ENCODE measurements at regions of chr7 and their contacts with region 1.

Region 1: DNA sequence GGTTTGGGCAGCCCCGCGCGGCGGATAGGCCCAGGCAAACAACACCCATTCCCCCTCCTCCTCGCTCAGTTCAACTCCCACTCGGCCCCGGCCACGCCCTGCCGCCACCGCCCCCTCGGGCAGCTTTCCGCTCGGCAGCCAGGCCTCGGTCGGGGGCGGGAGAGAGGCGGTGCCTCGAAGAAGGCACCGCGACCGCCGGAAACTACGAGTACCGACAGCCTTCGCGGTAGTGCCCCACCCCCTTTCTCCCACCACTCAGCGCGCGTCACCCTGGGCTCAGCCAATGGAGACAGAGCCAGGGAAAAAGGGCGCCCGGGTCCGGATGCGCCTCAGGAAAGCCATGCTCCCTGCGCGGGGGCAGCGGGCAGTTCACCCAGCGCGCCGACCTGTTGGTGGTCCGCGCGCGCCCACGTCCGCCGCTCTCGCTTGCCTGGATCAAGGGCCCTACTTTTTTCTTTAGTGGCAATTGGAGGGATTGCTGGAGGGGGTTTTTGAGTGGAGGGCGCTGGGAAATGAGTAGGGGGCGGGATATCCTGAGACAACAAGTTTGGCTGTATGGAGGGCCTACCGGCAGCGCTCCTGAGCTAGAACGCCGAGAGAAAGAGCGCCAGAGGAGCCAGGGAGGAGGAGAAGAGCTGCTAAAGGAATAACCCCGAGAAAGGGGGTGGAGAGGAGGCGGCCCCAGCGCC is 557 bp upstream of the SP4 start:
- DNase-seq: peak; percentile 99
- H3K4me3 ChIP-seq: peak overlapping the region; percentile 54 to 65 (median 55)
- H3K27ac ChIP-seq: peak overlapping the region; percentile 89
- H3K4me1 ChIP-seq: peaks cover 17% of the 10 kb centered on the region
- H3K27me3 ChIP-seq: no peaks in the 10 kb centered on the region
- CTCF ChIP-seq: no peak
- POLR2A ChIP-seq: peak; percentile 59

Region 2: DNA sequence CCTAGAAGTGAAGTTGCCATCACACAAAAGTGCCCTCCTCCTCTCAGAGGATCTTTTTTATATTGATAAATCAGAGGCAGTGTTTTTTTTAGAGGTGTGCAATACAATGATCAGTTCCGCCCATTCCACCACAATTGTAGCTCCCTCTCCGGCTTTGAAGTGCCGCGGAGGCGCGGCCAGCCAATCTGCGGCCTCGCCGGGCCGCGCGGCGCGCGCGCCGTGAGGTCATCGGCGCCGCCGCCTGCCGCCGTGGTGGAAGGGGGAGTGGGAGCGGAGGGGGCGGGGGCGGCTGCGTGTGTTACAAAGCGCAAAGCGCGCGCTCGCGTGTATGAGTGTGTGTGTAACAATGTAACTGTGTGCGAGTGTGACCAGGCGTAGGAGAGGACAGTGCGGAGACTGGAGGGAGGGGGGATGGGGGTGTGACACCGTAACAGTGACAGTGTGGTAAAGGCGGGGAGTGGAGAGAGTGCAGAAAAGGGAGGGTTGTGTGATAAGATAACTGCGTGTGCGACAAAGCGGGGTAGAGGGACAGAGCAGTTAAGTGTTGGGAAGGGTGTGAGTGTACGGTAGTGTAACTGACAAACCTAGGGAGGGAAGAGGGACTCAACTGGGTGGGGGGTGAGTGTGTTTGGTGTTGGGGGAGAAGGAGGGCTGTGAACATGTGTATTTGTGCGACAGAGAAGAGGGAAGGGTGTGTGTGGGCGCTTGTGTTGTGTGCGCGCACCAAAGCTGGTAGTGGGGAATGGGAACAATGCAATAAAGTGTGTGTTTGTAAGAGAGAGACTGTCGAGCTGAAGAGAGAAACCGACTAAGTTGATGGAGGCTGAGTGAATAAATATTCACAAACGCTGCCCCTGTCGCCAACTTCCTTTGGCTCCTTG is 640.3 kb before region 1 on chr7 and contains the start of gene SP8:
- CTCF ChIA-PET with region 1: no interaction called
- POLR2A ChIA-PET with region 1: no interaction called
- dilution Hi-C with region 1: no loop called
- intact Hi-C with region 1: loop called (anchors 2 kb)
- DNase-seq: peak; percentile 51
- H3K4me3 ChIP-seq: peak within 1 kb of the TSS; percentile 23 to 66 (median 38)
- H3K27ac ChIP-seq: no peak within 1 kb of the TSS
- H3K4me1 ChIP-seq: peaks cover 19% of the 10 kb centered on the region
- H3K27me3 ChIP-seq: peaks cover 74 to 97% of the 10 kb centered on the region in 2 experiments
- CTCF ChIP-seq: no peak
- POLR2A ChIP-seq: no peak
- total RNA-seq, gene SP8: 0.38 and 2.5 TPM in 2 replicates

Region 3: DNA sequence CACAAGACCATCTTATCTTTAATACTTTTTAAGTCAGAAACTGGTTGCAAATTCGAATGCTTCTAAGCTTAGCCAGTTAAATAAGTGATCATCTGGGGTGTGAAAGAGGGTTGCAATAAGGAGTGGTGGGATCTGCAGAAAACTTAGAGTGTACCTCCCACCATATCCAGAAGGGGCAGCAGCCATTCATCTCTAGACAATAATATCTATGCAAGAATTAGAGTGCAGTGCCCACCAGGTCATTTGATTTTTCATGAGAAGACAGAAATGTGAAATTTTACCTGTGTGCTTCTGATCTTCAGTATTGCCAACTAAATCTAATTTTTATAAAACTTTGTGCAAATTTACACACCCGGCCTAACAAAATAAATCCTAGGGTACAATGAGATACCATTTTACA is 126.6 kb before region 1 on chr7:
- CTCF ChIA-PET with region 1: no interaction called
- POLR2A ChIA-PET with region 1: no interaction called
- dilution Hi-C with region 1: no loop called
- intact Hi-C with region 1: loop called (anchors 2 kb)
- DNase-seq: no peak
- H3K4me3 ChIP-seq: no peak overlapping the region
- H3K27ac ChIP-seq: no peak overlapping the region
- H3K4me1 ChIP-seq: peaks cover 10% of the 10 kb centered on the region
- H3K27me3 ChIP-seq: no peaks in the 10 kb centered on the region
- CTCF ChIP-seq: peak; percentile 11 to 41
- POLR2A ChIP-seq: no peak

Region 4: GRCh38 chr7:21507626-21508343 is 80.5 kb after region 1 on chr7:
- CTCF ChIA-PET with region 1: interaction called, 3 read pairs
- POLR2A ChIA-PET with region 1: no interaction called
- dilution Hi-C with region 1: no loop called
- intact Hi-C with region 1: loop called (anchors 1 kb)
- DNase-seq: peak; percentile 52
- H3K4me3 ChIP-seq: no peak overlapping the region
- H3K27ac ChIP-seq: no peak overlapping the region
- H3K4me1 ChIP-seq: no peaks in the 10 kb centered on the region
- H3K27me3 ChIP-seq: no peaks in the 10 kb centered on the region
- CTCF ChIP-seq: peak; percentile 76
- POLR2A ChIP-seq: no peak

Region 5: GRCh38 chr7:21945454-21946227 is 518.3 kb after region 1 on chr7 and contains the start of gene CDCA7L:
- CTCF ChIA-PET with region 1: no interaction called
- POLR2A ChIA-PET with region 1: no interaction called
- dilution Hi-C with region 1: no loop called
- intact Hi-C with region 1: loop called (anchors 1 kb)
- DNase-seq: peak; percentile 82
- H3K4me3 ChIP-seq: peak within 1 kb of the TSS; percentile 59 to 91 (median 80)
- H3K27ac ChIP-seq: peak within 1 kb of the TSS; percentile 91
- H3K4me1 ChIP-seq: peaks cover 52% of the 10 kb centered on the region
- H3K27me3 ChIP-seq: no peaks in the 10 kb centered on the region
- CTCF ChIP-seq: no peak
- POLR2A ChIP-seq: peak; percentile 92
- total RNA-seq, gene CDCA7L: 91.6 and 93.7 TPM in 2 replicates